Calu3 (cell line): ENCODE measurements at regions of chr6 and their contacts with region 1.

Region 1: DNA sequence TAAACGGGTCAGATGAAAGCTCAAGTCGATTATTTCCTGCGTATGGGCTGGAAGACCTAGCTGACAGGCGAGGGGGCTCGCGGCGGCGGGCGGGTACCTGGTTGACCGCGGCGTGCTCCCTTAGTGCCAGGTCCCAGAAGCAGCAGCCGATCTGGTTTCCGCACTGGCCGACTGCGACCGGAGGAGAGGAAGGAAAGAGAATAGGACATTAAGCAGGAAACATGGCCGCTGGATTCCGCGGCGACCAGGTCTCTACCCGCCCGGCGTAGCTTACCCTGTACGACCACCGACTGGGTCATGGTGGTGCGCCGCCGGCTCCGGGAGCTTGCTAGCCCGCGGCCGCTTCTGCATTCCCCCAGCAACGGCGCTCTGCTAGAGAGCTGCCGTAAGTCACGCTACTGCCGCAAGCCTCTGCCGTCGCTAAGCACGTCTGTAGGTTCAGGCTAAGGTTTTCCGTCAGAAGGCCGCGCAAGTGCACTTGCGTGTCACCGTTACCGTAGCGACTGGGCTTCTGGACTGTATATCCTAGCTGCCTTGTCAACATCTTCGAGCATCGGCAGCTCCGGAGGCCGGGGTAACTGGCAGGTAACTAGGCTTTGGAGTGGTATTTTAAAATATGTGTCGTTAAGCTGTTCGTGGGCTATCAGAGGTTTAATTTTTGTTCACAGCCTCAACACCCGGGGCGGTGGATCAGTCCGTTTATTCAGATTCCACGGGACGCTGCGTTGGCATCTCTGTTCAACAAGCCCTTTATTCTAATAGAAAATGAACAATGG is at the starts of genes FAM229B and TUBE1:
- DNase-seq: peak; percentile 85
- H3K4me3 Mint-ChIP-seq: no peak within 1 kb of the TSS
- H3K27ac Mint-ChIP-seq: no peak within 1 kb of the TSS
- H3K4me1 Mint-ChIP-seq: no peaks in the 10 kb centered on the region
- H3K27me3 Mint-ChIP-seq: no peaks in the 10 kb centered on the region
- CTCF ChIP-seq: no peak
- total RNA-seq, gene FAM229B: 13.0 TPM in 2 replicates
- total RNA-seq, gene TUBE1: 21.0 and 25.6 TPM in 2 replicates

Region 2: DNA sequence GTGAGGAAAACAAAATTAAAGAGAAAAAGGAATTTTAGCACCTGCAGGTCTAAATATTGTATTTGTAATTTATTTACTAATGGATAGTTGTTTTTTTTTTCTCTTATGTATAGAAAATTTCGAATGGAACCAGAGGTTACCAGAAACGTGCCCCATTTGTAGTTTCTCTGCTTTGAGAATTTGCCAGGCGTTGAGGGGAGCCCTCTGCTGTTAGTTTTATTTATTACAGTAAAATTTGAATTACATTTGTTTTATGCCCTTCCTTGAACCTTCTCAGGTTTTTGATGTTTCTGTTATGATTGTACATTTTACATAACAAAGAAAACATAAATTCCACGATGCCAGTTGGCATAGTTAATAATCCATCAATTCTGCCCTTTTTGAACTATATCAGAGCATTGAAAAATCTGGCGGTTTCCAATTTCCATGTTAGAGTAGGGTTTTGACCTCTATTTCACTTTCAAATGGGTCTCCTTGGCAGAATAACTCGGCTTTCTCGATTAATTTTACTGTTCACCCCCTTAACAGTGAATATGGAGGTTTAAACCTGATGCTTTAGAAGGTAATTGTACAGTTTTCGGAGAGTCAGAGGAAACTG is 224.7 kb after region 1 on chr6:
- CTCF ChIA-PET with region 1: no interaction called
- intact Hi-C with region 1: no loop called
- DNase-seq: no peak
- H3K4me3 Mint-ChIP-seq: no peak overlapping the region
- H3K27ac Mint-ChIP-seq: no peak overlapping the region
- H3K4me1 Mint-ChIP-seq: peaks cover 11% of the 10 kb centered on the region
- H3K27me3 Mint-ChIP-seq: no peaks in the 10 kb centered on the region
- CTCF ChIP-seq: peak; percentile 60

Region 3: GRCh38 chr6:112372226-112372806 is 285.0 kb after region 1 on chr6:
- CTCF ChIA-PET with region 1: no interaction called
- intact Hi-C with region 1: loop called (anchors 2 kb)
- DNase-seq: no peak
- H3K4me3 Mint-ChIP-seq: no peak overlapping the region
- H3K27ac Mint-ChIP-seq: no peak overlapping the region
- H3K4me1 Mint-ChIP-seq: peaks cover 8% of the 10 kb centered on the region
- H3K27me3 Mint-ChIP-seq: peaks cover 40% of the 10 kb centered on the region
- CTCF ChIP-seq: no peak

Region 4: GRCh38 chr6:112752305-112752704 is 665.0 kb after region 1 on chr6:
- CTCF ChIA-PET with region 1: no interaction called
- intact Hi-C with region 1: no loop called
- DNase-seq: no peak
- H3K4me3 Mint-ChIP-seq: no peak overlapping the region
- H3K27ac Mint-ChIP-seq: no peak overlapping the region
- H3K4me1 Mint-ChIP-seq: no peaks in the 10 kb centered on the region
- H3K27me3 Mint-ChIP-seq: no peaks in the 10 kb centered on the region
- CTCF ChIP-seq: no peak